Right ventricle myocardium inferior (tissue), 1 donor: ENCODE measurements at regions of chr19 and their contacts with region 1.

Region 1: DNA sequence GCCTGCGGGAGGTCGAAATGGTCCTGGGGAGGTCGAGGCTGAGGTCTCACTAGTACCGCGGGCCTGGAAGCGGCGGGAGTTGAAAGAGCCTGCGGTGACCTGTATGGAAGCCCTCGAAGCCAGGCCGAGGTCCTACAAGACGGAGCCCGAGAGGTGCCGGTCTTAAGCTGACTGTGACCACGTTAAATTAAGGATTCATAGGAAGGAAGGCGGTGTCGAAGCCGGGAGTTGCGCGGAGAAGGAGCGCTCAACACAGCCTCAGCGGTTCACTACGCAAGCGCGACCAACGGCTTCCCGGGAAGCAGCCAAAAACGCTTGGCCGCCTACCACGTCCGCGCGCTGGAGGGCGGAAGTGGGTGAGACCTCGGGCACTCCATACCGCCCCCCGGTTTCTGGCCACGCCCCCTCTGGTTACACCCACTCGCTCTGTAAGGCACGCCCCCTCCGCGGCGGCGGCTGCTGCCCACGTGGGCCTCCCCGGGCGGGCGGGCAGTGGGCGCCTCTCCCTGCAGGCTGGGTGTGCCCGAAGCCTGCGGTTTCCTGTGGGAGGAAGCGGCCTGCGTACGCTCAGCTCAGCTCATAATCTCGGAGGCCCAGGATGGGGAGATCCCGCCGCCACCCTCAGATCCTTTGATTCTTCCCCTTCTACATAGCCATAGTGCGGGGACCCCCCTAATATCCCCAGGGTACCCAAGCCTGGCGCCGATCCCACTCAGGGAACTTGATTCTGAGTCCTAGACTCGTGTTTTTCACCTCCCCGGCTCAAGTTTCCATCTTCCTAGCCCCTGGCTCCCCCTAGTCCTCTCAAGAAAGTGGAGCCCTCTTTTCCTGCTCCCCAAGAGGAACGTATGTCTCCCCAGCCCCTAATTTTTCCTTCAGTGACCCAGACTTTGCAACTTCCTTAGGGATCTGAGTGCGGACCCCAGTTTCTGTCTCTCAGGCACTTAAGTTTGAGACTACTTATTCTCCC is 3.4 kb upstream of the EMP3 start:
- DNase-seq: peak; percentile 99
- ATAC-seq: peak; percentile 93

Region 2: GRCh38 chr19:48333467-48334384 is 11.8 kb after region 1 on chr19:
- intact Hi-C with region 1: loop called (anchors 1 kb)
- DNase-seq: peak; percentile 96
- ATAC-seq: peak; percentile 85

Region 3: GRCh38 chr19:48363810-48364563 is 42.1 kb after region 1 on chr19 and contains the starts of genes SYNGR4 and TMEM143:
- intact Hi-C with region 1: loop called (anchors 5 kb)
- DNase-seq: peak; percentile 99
- ATAC-seq: peak; percentile 96
- total RNA-seq, gene SYNGR4: not detected
- total RNA-seq, gene TMEM143: 106 TPM

Region 4: DNA sequence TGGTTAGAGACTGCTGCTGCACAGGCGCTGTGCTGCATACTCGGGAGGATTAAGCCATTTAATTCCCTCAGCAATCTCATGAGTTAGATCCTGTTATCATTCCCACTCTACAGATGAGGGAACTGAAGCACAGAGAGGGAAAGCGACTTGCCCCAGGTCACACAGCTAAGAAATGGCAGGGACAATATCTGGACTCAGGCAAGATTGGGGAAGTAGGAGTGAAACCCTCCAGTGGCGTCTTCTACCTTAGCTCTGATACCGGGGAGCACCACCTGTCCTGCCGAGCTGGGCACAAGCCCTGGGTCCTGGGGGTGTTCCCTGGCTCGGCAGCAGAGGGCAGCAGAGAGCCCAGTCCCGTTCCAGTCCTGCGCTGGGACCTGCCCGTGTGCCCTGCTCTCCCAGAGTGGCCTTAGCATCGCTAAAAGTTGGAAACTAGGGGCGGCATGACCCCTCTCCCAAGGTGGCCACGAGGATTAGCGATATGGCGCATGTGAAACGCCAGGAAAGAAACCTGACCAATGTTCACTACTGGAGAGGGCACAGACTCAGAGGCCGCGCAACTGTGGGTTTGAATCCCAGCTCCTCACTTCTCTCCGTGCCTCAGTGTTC is 167.8 kb after region 1 on chr19:
- intact Hi-C with region 1: loop called (anchors 10 kb)
- DNase-seq: peak; percentile 87
- ATAC-seq: no peak

Region 5: DNA sequence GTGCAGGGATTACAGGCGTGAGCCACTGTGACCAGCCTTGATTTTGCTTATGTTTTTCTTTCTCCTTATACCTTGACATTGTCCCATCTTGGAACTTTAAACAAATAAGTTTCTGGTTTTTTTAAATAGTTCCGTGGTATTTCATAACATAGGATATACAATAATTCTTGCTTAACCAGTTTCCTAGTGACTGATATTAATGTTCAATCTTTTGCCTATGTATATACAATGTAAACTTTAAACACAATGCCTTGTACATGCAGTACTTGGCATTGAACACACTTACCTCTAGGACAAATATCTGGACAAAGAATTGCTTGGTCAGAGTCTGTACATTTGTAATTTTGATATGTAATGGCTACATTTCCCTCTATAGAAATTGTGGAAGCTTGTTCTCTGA is 260.3 kb after region 1 on chr19:
- intact Hi-C with region 1: loop called (anchors 5 kb)
- DNase-seq: no peak
- ATAC-seq: no peak